AG04449 (cell line): ENCODE measurements at regions of chr16 and their contacts with region 1.

Region 1: DNA sequence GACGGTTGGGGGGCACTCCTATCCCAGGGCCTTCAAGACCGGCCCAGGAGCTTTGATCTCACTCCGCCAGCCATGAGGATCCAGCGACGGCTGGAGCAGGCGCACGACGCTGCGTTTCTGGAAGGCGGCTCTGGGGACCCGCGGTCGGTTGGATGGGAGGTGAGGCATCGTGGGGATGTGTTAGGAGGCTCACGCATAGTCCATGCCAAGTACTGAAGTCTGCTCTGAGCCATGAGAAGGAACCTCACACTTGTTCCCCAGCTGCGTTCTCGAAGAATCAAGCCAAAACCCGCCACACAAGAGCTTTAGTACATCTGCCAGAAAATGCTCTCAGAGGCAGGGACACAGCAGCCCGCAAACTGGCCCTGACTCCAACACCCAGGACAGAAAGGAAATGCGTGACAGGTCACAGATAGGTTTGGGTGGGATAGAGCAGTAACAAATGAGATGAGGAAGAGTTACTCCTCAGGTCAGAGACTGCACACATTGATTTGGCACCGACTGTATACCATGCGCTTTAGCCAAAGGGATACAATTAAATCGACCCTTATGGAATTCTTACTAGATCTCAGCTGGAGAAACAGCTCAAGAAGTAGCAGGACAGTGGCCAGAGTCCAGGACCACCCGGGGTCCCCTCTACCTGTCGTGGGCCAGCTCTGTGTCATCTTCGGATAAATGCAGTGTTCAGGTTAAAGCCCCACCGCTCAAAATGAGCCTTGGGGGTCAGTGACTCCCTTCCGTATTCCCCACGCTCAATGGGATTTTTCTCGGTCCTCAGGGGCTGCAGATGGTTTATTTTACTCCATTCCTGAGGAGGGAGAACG is 6.7 kb upstream of the GSG1L start:
- DNase-seq: no peak
- H3K4me3 ChIP-seq: no peak overlapping the region
- CTCF ChIP-seq: no peak

Region 2: DNA sequence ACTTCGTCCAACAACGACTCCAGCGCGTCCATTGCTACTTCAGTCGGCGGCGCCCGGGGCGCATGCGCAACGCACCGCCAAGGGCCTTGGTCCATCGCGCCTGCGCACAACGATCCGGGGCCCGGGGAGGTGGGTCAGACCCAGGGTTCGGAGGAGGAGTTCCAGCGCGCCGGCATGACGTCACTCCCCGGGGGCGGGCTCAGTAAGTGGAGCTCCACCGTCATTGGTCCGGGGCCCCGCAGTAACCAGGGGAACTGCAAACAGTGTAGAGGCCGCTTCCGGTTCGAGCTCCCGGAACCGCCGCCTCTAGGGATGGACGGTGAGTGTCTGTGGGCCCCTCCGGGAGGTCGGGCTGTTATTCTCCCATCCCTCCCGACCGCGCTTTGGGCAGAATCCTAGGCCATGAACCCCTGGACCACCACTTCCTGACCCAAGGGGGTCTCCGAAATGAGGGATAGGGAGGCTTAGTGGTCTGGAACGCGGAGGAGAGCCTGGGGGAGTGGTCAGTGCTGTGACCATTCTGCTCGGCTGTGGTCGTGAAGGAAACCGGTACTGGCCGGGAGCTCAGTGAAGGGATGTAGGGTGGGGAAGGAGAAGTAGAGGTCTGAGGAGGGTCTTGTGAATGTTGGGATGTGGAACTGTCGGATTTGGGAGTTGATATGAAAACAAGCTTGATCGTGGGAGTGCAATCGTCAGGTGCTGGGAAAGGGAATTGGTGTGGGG is 520.2 kb before region 1 on chr16 and contains the starts of genes GTF3C1 and KATNIP:
- CTCF ChIA-PET with region 1: interaction called, 10 read pairs
- POLR2A ChIA-PET with region 1: no interaction called
- DNase-seq: peak; percentile 85
- H3K4me3 ChIP-seq: peak within 1 kb of the TSS; percentile 93
- CTCF ChIP-seq: no peak

Region 3: GRCh38 chr16:27639561-27640276 is 430.5 kb before region 1 on chr16:
- CTCF ChIA-PET with region 1: interaction called, 75 read pairs
- POLR2A ChIA-PET with region 1: no interaction called
- DNase-seq: peak; percentile 10
- H3K4me3 ChIP-seq: no peak overlapping the region
- CTCF ChIP-seq: peak; percentile 79

Region 4: GRCh38 chr16:27839419-27839818 is 230.8 kb before region 1 on chr16:
- CTCF ChIA-PET with region 1: no interaction called
- POLR2A ChIA-PET with region 1: no interaction called
- DNase-seq: no peak
- H3K4me3 ChIP-seq: no peak overlapping the region
- CTCF ChIP-seq: no peak

Region 5: GRCh38 chr16:27972500-27972899 is 97.7 kb before region 1 on chr16:
- CTCF ChIA-PET with region 1: interaction called, 39 read pairs
- POLR2A ChIA-PET with region 1: no interaction called
- DNase-seq: no peak
- H3K4me3 ChIP-seq: no peak overlapping the region
- CTCF ChIP-seq: peak; percentile 32

Region 6: GRCh38 chr16:28090646-28091377 is 20.6 kb after region 1 on chr16:
- CTCF ChIA-PET with region 1: interaction called, 12 read pairs
- POLR2A ChIA-PET with region 1: no interaction called
- DNase-seq: no peak
- H3K4me3 ChIP-seq: no peak overlapping the region
- CTCF ChIP-seq: no peak

Region 7: GRCh38 chr16:28181515-28181914 is 111.3 kb after region 1 on chr16:
- CTCF ChIA-PET with region 1: no interaction called
- POLR2A ChIA-PET with region 1: no interaction called
- DNase-seq: peak; percentile 88
- H3K4me3 ChIP-seq: peak overlapping the region; percentile 4; the same call in 1 of the 2 replicates
- CTCF ChIP-seq: no peak

Region 8: DNA sequence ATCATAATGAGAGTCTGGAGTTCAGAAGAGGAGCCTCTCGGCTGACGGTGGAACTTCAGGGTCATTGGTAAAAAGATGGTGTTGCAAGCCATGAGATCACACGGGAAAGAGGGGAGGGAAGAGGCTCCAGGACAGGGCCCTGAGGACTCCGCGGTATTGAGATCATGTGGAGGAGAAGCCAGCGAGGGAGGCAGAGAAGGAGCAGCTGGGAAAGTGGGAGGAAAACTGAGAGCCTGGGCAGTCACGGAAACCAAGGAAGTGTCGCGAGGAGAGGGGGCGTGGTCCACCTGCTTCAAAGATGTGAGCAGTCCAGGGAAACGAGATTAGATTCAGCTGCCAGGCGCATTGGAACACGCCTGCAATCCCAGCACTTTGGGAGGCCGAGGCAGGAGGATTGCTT is 194.5 kb after region 1 on chr16:
- CTCF ChIA-PET with region 1: no interaction called
- POLR2A ChIA-PET with region 1: no interaction called
- DNase-seq: no peak
- H3K4me3 ChIP-seq: no peak overlapping the region
- CTCF ChIP-seq: no peak